Endothelial cell of umbilical vein (primary cell): ENCODE measurements at regions of chr17 and their contacts with region 1.

Region 1: GRCh38 chr17:48335858-48336500 is 94.0 kb downstream of the SKAP1 start:
- DNase-seq: peak; percentile 87
- H3K4me3 ChIP-seq: no peak overlapping the region
- H3K27ac ChIP-seq: no peak overlapping the region
- H3K4me1 ChIP-seq: no peaks in the 10 kb centered on the region
- H3K27me3 ChIP-seq: peaks cover 0 to 3% of the 10 kb centered on the region in 2 experiments
- CTCF ChIP-seq: peak; percentile 47 to 55
- POLR2A ChIP-seq: no peak

Region 2: GRCh38 chr17:47949136-47949759 is 386.7 kb before region 1 on chr17:
- CTCF ChIA-PET with region 1: no interaction called
- POLR2A ChIA-PET with region 1: no interaction called
- dilution Hi-C with region 1: no loop called
- intact Hi-C with region 1: no loop called
- DNase-seq: peak; percentile 77
- H3K4me3 ChIP-seq: no peak overlapping the region
- H3K27ac ChIP-seq: no peak overlapping the region
- H3K4me1 ChIP-seq: peaks cover 4% of the 10 kb centered on the region
- H3K27me3 ChIP-seq: no peaks in the 10 kb centered on the region
- CTCF ChIP-seq: peak; percentile 90 to 95
- POLR2A ChIP-seq: no peak

Region 3: DNA sequence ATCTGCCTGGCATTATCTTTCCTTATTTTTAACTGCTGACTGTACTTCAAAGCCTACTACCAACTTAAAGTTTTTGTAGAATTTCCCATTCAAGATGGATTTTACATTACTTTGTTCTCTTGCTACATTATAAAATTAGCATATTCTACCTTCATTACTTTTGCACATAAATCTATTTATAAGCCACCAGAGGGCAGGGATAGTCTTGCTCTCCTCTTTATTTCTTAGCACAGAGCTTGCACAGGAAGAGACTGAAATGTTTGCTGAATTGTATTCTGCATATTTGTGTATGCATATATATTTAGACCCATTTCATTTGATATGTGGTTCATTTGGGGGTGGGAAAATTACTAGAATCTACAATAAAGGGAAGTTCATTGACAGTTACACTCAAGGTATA is 13.9 kb before region 1 on chr17:
- CTCF ChIA-PET with region 1: interaction called, 20 read pairs
- POLR2A ChIA-PET with region 1: no interaction called
- dilution Hi-C with region 1: no loop called
- intact Hi-C with region 1: no loop called
- DNase-seq: no peak
- H3K4me3 ChIP-seq: no peak overlapping the region
- H3K27ac ChIP-seq: no peak overlapping the region
- H3K4me1 ChIP-seq: no peaks in the 10 kb centered on the region
- H3K27me3 ChIP-seq: no peaks in the 10 kb centered on the region
- CTCF ChIP-seq: peak in 1 of 2 donors; percentile 8
- POLR2A ChIP-seq: no peak

Region 4: DNA sequence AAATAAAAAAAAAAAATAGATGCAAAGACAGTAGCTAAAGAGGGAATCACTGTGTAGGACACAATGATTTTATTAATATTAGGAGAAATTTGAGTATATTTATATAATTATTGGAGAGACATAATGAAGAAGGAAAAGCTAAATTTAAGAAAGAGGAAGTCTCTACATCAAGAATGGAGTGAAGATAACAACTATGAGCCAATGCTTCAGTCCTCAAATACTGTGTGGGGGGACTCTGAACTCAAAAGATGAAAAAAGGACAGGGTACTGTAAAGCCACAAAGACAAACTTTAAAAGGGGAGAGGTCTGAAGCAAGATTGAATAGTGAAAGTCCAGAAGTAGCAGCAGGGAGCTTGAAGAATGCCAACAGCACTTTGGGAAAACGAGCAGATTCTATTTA is 49.3 kb after region 1 on chr17:
- CTCF ChIA-PET with region 1: no interaction called
- POLR2A ChIA-PET with region 1: no interaction called
- dilution Hi-C with region 1: no loop called
- intact Hi-C with region 1: no loop called
- DNase-seq: no peak
- H3K4me3 ChIP-seq: no peak overlapping the region
- H3K27ac ChIP-seq: no peak overlapping the region
- H3K4me1 ChIP-seq: no peaks in the 10 kb centered on the region
- H3K27me3 ChIP-seq: peaks cover 61 to 80% of the 10 kb centered on the region in 2 experiments
- CTCF ChIP-seq: no peak
- POLR2A ChIP-seq: no peak

Region 5: GRCh38 chr17:48457080-48457836 is 121.3 kb after region 1 on chr17:
- CTCF ChIA-PET with region 1: interaction called, 7 read pairs
- POLR2A ChIA-PET with region 1: no interaction called
- dilution Hi-C with region 1: no loop called
- intact Hi-C with region 1: loop called (anchors 2 kb)
- DNase-seq: peak; percentile 70
- H3K4me3 ChIP-seq: no peak overlapping the region
- H3K27ac ChIP-seq: no peak overlapping the region
- H3K4me1 ChIP-seq: no peaks in the 10 kb centered on the region
- H3K27me3 ChIP-seq: peaks cover 40 to 54% of the 10 kb centered on the region in 2 experiments
- CTCF ChIP-seq: peak; percentile 96 to 98
- POLR2A ChIP-seq: no peak

Region 6: GRCh38 chr17:48593840-48594537 is 258.0 kb after region 1 on chr17:
- CTCF ChIA-PET with region 1: interaction called, 16 read pairs
- POLR2A ChIA-PET with region 1: no interaction called
- dilution Hi-C with region 1: no loop called
- intact Hi-C with region 1: no loop called
- DNase-seq: peak; percentile 86
- H3K4me3 ChIP-seq: no peak overlapping the region
- H3K27ac ChIP-seq: peak overlapping the region; percentile 0
- H3K4me1 ChIP-seq: peaks cover 25% of the 10 kb centered on the region
- H3K27me3 ChIP-seq: no peaks in the 10 kb centered on the region
- CTCF ChIP-seq: peak; percentile 95 to 97
- POLR2A ChIP-seq: no peak

Region 7: DNA sequence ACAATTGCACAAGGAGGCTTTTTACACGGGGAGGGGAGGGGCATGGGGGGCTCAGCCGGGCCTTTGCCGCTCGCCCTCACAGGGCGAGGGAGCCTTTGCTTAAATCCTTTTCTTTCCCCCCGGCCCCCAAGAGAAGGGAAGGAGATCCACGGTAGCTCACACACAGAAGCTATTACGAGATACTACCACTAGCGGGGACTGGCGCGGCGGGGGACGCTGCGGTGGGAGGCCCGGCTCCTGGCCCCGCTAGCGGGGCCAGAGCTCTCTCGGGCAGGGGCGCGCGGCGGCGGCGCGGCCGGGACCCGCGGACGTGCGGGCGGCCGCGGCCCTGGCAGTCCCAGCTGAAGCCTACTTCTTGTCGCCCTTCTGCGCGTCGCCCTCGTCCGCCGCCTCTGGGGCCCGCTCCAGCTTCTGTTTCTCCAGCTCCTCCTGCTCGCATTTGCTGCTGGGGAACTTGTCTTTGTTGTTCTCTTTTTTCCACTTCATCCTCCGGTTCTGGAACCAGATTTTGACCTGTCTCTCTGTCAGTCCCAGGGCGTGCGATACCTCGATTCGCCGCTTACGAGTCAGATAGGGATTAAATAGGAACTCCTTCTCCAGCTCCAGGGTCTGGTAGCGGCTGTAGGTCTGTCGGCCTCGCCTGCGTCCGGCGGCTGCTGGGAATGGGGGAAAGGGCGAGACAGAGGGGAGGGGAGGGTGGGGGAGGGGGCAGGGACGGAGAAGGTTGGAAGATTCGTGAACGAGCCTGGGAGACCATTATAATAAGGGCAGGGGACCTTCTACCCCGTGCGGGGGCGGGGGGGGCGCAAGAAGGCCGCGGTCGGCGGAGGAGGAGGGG is 277.1 kb after region 1 on chr17:
- CTCF ChIA-PET with region 1: interaction called, 20 read pairs
- POLR2A ChIA-PET with region 1: no interaction called
- dilution Hi-C with region 1: no loop called
- intact Hi-C with region 1: loop called (anchors 1 kb)
- DNase-seq: peak; percentile 67
- H3K4me3 ChIP-seq: peak overlapping the region; percentile 52 to 86 (median 80)
- H3K27ac ChIP-seq: peak overlapping the region; percentile 47
- H3K4me1 ChIP-seq: peaks cover 38% of the 10 kb centered on the region
- H3K27me3 ChIP-seq: peaks cover 28 to 35% of the 10 kb centered on the region in 2 experiments
- CTCF ChIP-seq: peak; percentile 4 to 47
- POLR2A ChIP-seq: no peak

Region 8: DNA sequence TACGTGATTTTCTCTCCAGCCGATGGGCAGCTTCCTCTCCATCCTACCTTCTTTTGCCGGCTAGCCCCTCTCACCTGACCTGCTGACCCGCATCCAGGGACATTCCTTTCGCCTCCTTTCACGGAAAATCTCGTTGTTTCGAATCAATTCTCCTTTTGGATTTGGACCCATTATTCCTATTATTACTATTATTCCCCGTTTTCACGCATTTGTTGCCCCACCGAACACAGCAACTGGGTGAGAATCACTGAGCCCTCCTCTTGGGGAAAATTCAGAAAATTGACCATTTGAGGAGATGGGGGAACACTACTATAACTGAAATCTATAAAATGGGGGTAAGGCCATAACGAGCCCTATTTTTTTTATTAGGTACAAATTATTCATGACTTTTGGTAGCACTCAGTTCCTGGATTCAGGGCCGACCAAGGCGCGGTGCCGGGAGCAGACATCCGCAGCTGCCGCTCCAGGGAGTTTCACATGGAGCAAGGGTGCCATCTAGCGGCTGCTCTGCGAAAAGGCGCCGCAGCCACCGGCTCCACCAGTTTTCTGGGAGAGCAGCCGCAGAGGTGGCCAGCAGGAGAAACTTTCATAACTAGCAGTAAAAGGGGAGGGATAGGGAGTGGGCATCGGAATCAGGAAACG is 282.4 kb after region 1 on chr17:
- CTCF ChIA-PET with region 1: interaction called, 20 read pairs
- POLR2A ChIA-PET with region 1: no interaction called
- dilution Hi-C with region 1: no loop called
- intact Hi-C with region 1: loop called (anchors 1 kb)
- DNase-seq: peak; percentile 83
- H3K4me3 ChIP-seq: peak overlapping the region; percentile 3 to 46 (median 30)
- H3K27ac ChIP-seq: no peak overlapping the region
- H3K4me1 ChIP-seq: peaks cover 27% of the 10 kb centered on the region
- H3K27me3 ChIP-seq: peaks cover 66 to 79% of the 10 kb centered on the region in 2 experiments
- CTCF ChIP-seq: peak; percentile 91 to 99
- POLR2A ChIP-seq: no peak